ENCODE measurements at regions of chr6 and their contacts with region 1.

Region 1: DNA sequence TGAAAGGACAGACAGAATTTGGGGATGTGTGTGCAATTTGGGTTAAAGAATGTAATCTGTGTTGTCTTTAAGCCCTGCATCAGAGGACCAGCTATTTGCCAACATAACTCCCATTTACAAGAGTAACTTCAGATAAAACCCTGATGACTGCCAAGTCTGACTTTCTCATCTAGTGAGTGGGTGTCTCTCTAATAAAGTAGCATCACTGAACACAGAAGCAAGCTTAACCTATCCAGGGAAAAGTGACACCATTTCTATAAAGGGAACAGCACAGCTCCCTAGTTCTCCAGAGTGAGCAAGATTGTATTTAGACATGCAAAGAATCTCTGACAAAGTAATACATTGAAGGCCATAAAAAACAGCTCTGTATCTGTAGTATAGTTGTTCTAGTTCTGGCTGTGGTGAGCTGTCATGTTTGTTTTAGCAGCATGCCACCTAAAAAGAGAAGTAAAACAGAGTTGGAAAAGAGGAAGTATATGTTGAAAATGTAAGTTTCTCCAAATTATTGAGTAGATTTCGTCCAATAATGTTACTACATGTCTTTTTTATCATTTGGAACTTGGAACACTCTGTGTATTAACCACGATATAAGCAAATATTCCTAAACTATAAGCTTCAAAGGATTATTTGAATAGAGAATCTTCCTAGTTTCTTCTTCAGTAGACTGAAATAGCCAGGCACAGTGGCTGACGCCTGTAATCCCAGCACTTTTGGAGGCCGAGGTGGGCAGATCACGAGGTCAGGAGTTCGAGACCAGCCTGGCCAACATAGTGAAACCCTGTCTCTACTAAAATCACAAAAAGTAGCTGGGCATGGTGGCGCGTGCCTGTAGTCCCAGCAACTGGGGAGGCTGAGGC is 8.8 kb upstream of the PIM1 start:
- DNase-seq: peak; percentile 64
- H3K4me3 ChIP-seq: no peak overlapping the region
- CTCF ChIP-seq: no peak

Region 2: GRCh38 chr6:37141281-37142049 is 19.7 kb before region 1 on chr6:
- CTCF ChIA-PET with region 1: interaction called, 4 read pairs
- POLR2A ChIA-PET with region 1: interaction called, 12 read pairs
- DNase-seq: peak; percentile 72
- H3K4me3 ChIP-seq: no peak overlapping the region
- CTCF ChIP-seq: no peak